Common myeloid progenitor, CD34-positive (primary cell): ENCODE measurements at regions of chr14 and their contacts with region 1.

Region 1: DNA sequence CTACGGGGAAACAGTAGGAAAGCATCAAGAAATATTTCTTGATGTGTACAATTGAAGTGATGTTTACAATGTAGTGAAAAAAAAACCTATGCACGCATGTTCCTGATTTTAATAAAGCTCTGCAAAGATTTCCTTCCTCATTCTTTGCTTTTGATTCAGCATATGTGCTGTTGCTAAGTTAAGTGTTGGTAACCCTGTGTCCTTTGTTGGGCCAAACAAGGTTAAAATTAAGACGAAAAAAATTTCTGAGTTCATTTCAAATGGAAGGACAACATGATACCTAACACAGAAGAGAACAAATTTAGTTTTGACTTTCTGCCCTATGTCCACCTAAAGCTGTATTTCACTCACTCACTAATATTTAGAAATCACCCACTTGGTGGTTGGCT is 62.8 kb downstream of the PPP2R5C start:
- DNase-seq: peak; percentile 58 to 85 (median 82)
- H3K4me3 ChIP-seq: peak overlapping the region in 3 of 7 experiments; percentile 24 to 63 (median 30)
- H3K27ac ChIP-seq: peak overlapping the region; percentile 95 to 98
- H3K4me1 ChIP-seq: peaks cover 23 to 30% (median 26%) of the 10 kb centered on the region in 4 experiments
- H3K27me3 ChIP-seq: no peaks in the 10 kb centered on the region

Region 2: DNA sequence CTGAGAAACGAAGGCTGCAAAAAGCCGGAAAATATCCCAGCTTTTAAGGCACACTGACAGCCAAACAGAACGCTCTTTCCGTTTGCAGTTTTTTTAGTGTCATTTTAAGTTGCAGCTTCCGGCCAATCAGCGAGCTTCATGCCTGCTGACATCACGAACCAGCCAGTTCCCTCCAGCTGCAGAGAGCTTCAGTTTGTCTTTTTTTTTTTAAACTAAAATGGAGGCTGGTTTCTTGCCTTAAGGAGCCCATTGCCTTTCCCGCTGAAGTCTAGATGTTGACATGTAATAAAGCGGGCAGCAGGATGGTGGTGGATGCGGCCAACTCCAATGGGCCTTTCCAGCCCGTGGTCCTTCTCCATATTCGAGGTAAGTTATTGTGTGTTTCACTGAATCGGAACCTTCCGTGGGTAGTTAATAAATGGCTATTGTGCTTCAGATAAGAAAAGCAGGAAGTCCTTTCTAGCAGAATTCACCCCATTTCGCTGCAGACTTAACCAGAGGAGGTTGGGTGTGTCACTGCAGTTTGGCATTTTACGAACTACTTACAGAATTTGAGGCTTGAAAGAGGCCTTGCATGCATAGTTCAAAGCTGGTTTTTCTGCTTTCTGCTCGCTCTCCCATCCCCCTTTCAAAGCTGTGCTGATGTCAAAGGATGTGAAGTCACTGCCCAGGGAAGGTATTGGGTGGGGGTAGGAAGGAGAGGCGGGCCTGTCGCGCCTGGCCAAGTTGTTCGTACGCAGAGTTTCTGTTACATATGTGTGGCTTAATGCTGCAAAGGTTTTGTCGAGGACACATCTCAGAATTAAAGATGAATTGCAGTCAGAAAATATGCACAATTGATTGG is 14.4 kb before region 1 on chr14:
- CTCF ChIA-PET with region 1: interaction called, 20 read pairs
- POLR2A ChIA-PET with region 1: interaction called, 9 read pairs
- DNase-seq: peak; percentile 95 to 98 (median 98)
- H3K4me3 ChIP-seq: peak overlapping the region; percentile 27 to 97 (median 83)
- H3K27ac ChIP-seq: peak overlapping the region; percentile 99 to 100
- H3K4me1 ChIP-seq: peaks cover 10 to 25% (median 18%) of the 10 kb centered on the region in 4 experiments
- H3K27me3 ChIP-seq: no peaks in the 10 kb centered on the region